PC-9 (cell line): ENCODE measurements at regions of chr5 and their contacts with region 1.

Region 1: GRCh38 chr5:151880324-151880723 is 44.3 kb downstream of the GLRA1 start:
- DNase-seq: no peak
- H3K4me3 ChIP-seq: no peak overlapping the region
- H3K27ac ChIP-seq: no peak overlapping the region
- H3K4me1 ChIP-seq: no peaks in the 10 kb centered on the region
- H3K27me3 ChIP-seq: no peaks in the 10 kb centered on the region
- CTCF ChIP-seq: no peak

Region 2: GRCh38 chr5:151740336-151740942 is 139.9 kb before region 1 on chr5:
- CTCF ChIA-PET with region 1: no interaction called
- POLR2A ChIA-PET with region 1: no interaction called
- intact Hi-C with region 1: no loop called
- DNase-seq: peak; percentile 46 to 49
- H3K4me3 ChIP-seq: no peak overlapping the region
- H3K27ac ChIP-seq: no peak overlapping the region
- H3K4me1 ChIP-seq: peaks cover 32% of the 10 kb centered on the region
- H3K27me3 ChIP-seq: no peaks in the 10 kb centered on the region
- CTCF ChIP-seq: peak; percentile 92

Region 3: DNA sequence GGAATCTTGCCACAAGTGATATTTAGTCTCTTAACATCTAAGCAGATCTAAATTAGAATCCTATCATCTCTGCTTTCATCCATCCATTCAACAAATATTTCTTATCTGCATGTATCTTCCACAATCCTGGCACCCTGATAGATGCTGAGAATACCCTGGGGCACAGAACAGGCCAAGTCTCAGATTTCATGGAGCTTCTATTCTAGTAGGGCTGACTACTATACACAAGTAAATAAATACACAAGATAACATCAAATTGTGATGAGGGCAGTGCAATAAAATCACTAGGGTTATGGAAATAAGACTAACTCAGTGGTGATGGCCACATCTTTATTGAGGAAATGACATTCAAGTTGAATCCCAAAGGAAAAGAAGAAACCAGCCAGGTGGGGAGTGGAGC is 182.6 kb after region 1 on chr5:
- CTCF ChIA-PET with region 1: no interaction called
- POLR2A ChIA-PET with region 1: interaction called, 17 read pairs
- intact Hi-C with region 1: no loop called
- DNase-seq: no peak
- H3K4me3 ChIP-seq: no peak overlapping the region
- H3K27ac ChIP-seq: no peak overlapping the region
- H3K4me1 ChIP-seq: no peaks in the 10 kb centered on the region
- H3K27me3 ChIP-seq: peaks cover 18% of the 10 kb centered on the region
- CTCF ChIP-seq: no peak